ENCODE measurements at regions of chrX and their contacts with region 1.

Region 1: GRCh38 chrX:133335027-133335426 is 80.3 kb downstream of the GPC4 start:
- DNase-seq: no peak
- H3K4me3 ChIP-seq: no peak overlapping the region
- CTCF ChIP-seq: peak; percentile 39

Region 2: GRCh38 chrX:133323431-133323830 is 11.6 kb before region 1 on chrX:
- CTCF ChIA-PET with region 1: interaction called, 18 read pairs
- POLR2A ChIA-PET with region 1: no interaction called
- DNase-seq: no peak
- H3K4me3 ChIP-seq: no peak overlapping the region
- CTCF ChIP-seq: no peak

Region 3: DNA sequence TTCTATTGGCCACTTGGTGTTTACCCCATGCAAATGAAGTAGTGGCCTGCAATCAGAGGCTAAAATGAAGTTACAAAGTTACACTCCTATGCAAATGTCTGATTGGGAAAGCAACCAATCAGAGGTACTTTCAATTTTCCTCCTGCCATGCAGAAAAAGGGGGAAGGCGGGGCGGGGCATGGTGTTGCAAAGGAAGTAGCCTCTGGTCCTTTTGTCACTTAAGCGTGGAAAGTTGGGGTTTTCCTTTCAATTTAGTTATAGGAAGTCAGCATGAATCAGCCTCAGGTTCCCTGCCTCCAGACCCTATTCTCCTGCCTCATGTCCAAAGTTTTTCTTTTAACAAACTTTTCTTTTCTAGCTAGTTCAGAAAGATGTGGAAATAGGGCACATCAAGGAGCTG is 11.0 kb after region 1 on chrX:
- CTCF ChIA-PET with region 1: interaction called, 20 read pairs
- POLR2A ChIA-PET with region 1: no interaction called
- DNase-seq: no peak
- H3K4me3 ChIP-seq: no peak overlapping the region
- CTCF ChIP-seq: no peak

Region 4: DNA sequence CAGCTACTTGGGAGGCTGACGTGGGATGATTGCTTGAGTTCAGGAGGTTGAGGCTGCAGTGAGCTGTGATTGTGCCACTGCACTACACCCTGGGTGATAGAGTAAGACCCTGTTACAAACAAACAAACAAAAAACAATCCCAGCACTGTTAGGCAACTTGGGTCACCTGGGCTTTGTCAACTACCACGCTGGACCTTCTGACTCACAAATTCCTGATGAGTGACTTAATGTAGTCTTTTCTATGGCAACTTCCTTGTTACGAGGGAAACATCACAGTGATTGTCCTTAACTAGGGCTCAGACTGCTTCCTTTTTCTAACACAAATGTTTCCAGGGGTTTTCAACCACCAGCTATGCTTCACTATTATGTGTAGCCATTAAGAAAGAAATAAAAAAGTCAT is 209.1 kb after region 1 on chrX:
- CTCF ChIA-PET with region 1: no interaction called
- POLR2A ChIA-PET with region 1: no interaction called
- DNase-seq: no peak
- H3K4me3 ChIP-seq: no peak overlapping the region
- CTCF ChIP-seq: no peak